ENCODE measurements at regions of chr1 and their contacts with region 1.

Region 1: GRCh38 chr1:113928941-113929749 is at the start of gene HIPK1:
- DNase-seq: peak; percentile 94 to 95
- ATAC-seq: peak; percentile 93 to 96 (median 95)
- H3K4me3 ChIP-seq: peak within 1 kb of the TSS; percentile 40 to 97 (median 90)
- H3K27ac ChIP-seq: peak within 1 kb of the TSS; percentile 80 to 97 (median 94)
- H3K4me1 ChIP-seq: peaks cover 2 to 52% (median 42%) of the 10 kb centered on the region in 9 donors
- H3K27me3 ChIP-seq: no peaks in the 10 kb centered on the region
- CTCF ChIP-seq: no peak
- total RNA-seq, gene HIPK1: 42.6 to 91.0 (median 62.2) TPM

Region 2: GRCh38 chr1:113811888-113812660 is 117.1 kb before region 1 on chr1 and contains the start of gene RSBN1:
- intact Hi-C with region 1: loop called in 1 of 10 experiments (anchors 1 kb)
- DNase-seq: peak; percentile 99
- ATAC-seq: peak; percentile 97 to 99 (median 98)
- H3K4me3 ChIP-seq: peak within 1 kb of the TSS; percentile 76 to 98 (median 91)
- H3K27ac ChIP-seq: peak within 1 kb of the TSS; percentile 77 to 97 (median 95)
- H3K4me1 ChIP-seq: peaks cover 0 to 34% (median 25%) of the 10 kb centered on the region in 9 donors
- H3K27me3 ChIP-seq: no peaks in the 10 kb centered on the region
- CTCF ChIP-seq: peak in 6 of 9 donors; percentile 7 to 47 (median 24)
- total RNA-seq, gene RSBN1: 7.5 to 13.9 (median 11.8) TPM

Region 3: DNA sequence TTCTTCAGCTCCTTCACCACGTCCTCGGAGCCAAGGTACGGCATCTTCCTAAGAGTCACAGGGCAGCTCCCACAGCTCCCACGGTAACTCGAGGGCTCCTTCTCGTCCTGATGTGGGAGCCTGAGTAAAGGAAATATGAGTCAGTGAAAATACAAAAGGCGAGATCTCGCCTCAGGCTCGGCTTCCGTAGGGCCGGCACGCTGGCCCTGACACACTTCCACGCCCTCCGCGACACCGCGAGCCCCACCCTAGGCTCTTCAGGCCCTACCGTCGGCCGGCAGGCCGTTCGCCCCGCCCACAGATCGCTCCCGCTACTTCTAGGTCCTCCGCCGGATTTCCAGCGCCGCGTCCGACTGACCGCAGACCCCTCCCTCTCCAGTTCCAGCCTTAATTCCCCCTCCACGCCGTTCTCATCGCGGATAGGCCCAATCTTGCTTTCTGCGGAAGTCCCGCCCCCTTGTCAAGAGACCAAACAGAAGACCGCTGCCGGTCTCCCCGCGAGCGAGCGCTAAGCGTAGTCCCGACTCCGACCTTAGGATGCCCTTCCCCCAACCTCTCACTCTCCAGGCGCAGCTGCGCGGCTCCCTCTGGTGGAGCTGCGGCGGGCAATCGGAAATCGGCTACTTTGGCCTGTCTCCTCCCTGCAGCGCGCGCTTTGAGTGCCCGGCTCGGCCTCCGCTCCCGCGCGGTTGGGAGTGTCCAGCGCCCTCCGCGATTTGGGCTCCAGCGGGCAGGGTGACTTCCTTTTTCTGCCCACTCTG is 24.3 kb before region 1 on chr1 and contains the starts of genes AP4B1 and DCLRE1B:
- intact Hi-C with region 1: loop called in 7 of 10 experiments (anchors 1 to 2 kb)
- DNase-seq: peak; percentile 98 to 100
- ATAC-seq: peak; percentile 96 to 99 (median 98)
- H3K4me3 ChIP-seq: peak within 1 kb of the TSS; percentile 58 to 86 (median 78)
- H3K27ac ChIP-seq: peak within 1 kb of the TSS; percentile 52 to 95 (median 92)
- H3K4me1 ChIP-seq: peaks cover 0 to 49% (median 24%) of the 10 kb centered on the region in 9 donors
- H3K27me3 ChIP-seq: no peaks in the 10 kb centered on the region
- CTCF ChIP-seq: peak; percentile 37 to 88 (median 71)
- total RNA-seq, gene AP4B1: 9.1 to 13.9 (median 11.5) TPM
- total RNA-seq, gene DCLRE1B: 0.78 to 4.2 (median 2.1) TPM

Region 4: DNA sequence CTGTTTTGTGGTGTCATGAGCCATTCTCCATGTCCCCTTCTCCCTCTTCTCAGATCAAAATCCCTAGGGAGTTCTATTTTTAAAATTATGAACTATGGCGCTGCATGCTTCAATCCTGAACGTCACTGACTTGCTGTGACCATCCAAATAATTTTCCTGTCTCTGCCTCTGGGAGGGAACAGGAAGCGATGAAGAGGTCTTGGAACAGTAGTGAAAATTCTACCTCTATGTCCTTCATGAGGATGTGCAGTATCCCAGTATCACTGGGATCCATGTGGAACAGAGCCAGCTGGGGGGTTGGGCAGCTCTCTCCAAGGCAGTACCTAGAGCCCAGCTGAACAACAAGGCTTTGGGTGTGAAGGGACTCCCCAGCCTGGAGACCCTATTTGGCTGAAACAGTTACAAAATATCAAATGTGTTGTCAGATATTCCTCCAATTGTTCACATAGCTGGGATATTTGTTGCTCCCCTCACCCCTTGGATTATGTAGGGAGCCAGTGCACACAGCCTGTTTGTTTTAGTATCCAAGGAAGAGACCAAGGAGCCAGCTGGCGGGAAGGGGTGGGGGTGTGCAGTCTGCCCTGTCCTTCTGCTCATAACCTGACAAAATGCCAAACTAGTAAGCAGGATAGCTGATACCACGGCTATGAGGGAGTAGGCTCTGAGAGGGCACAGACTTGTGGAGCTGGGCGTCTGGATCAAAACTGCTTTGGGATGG is 16.4 kb before region 1 on chr1:
- intact Hi-C with region 1: loop called in 2 of 10 experiments (anchors 2 kb)
- DNase-seq: peak; percentile 42 to 60
- ATAC-seq: peak; percentile 78 to 94 (median 90)
- H3K4me3 ChIP-seq: peak overlapping the region in 2 of 10 donors; percentile 6 to 21
- H3K27ac ChIP-seq: peak overlapping the region; percentile 39 to 86 (median 72)
- H3K4me1 ChIP-seq: peaks cover 0 to 20% (median 14%) of the 10 kb centered on the region in 9 donors
- H3K27me3 ChIP-seq: no peaks in the 10 kb centered on the region
- CTCF ChIP-seq: no peak

Region 5: DNA sequence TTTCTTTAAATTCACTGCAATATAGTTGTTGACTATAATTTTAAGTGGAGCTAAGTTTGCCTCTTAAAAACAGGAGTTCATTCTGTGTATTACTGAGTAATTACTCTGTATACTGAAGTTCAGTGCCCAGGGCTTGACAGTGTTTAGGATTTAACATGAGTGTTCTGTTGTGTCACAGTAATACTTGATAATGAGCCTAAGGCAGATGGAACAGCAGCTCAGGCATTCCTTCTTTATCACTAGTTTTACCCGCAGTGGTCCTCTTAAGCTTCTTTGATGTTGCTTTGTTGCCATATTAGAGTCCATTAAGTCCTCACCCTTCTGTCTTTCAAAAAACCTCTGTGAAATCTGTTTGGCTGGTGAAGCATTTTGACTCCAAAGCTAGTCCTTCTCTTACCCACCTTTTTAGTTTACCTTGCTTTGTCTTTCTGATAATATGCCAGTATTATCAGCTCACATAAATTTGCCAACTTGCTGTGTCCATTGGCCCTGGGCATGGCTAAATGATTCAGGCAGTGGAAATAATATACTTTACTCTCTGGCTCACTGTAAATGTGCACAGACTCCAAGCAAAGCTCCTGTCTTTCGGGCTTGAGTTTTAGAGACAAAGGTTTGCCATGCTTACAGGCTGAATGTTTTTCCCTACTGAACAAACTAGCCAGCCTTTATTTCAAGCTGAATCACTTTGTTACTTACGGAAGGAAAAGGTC is 17.7 kb after region 1 on chr1:
- intact Hi-C with region 1: loop called in 1 of 10 experiments (anchors 2 kb)
- DNase-seq: no peak
- ATAC-seq: peak in 3 of 8 donors; percentile 46 to 59 (median 46)
- H3K4me3 ChIP-seq: no peak overlapping the region
- H3K27ac ChIP-seq: peak overlapping the region in 7 of 10 donors; percentile 9 to 69 (median 44)
- H3K4me1 ChIP-seq: peaks cover 5 to 50% (median 31%) of the 10 kb centered on the region in 9 donors
- H3K27me3 ChIP-seq: no peaks in the 10 kb centered on the region
- CTCF ChIP-seq: no peak

Region 6: DNA sequence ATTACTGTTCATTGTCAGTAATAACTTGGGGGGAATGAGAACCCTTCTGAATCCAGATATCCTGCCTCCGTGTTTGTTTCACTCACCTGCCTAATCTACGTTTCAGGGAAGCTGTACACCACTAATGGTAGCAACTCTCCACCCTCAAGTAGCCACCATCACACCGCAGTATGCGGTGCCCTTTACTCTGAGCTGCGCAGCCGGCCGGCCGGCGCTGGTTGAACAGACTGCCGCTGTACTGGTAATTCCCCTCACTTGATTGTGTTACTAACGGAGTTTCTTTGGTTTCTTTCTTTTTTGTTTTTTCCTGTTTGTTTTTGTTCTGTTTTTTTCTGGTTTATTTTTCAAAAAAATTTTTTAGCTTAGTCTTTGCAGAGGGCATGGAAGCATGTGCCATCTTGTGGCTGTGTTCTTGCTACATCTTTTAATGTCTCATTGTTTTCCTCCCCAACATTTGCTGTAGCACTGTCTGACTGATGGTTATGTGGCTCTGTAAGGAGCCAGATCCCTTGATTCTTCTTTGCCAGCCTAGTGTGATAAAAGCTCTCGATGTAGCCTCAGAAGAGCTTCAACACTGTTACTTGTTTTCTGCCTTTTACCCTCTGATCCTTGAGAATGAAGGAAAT is 34.2 kb after region 1 on chr1:
- intact Hi-C with region 1: no loop called
- DNase-seq: no peak
- ATAC-seq: no peak
- H3K4me3 ChIP-seq: no peak overlapping the region
- H3K27ac ChIP-seq: no peak overlapping the region
- H3K4me1 ChIP-seq: no peaks in the 10 kb centered on the region
- H3K27me3 ChIP-seq: no peaks in the 10 kb centered on the region
- CTCF ChIP-seq: peak in 2 of 9 donors; percentile 8 to 12

Region 7: DNA sequence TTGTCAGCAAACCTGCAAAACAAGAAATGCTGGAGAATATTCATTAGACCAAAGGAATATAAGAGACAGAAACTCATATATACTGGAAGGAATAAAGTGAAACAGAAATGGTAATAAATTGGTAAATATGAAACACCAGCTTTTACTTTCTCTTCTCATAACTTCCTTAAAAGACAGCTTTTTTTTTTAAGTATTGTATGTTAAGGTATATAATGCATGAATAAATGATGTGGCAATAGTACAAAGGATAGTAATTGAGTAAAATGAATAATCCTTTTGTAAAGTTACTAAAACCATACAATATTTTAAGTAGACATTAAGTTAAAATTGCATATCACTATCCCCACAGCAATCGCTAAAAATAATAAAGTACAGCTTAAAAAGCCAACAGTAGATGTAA is 517.1 kb after region 1 on chr1:
- intact Hi-C with region 1: no loop called
- DNase-seq: no peak
- ATAC-seq: no peak
- H3K4me3 ChIP-seq: no peak overlapping the region
- H3K27ac ChIP-seq: peak overlapping the region in 1 of 10 donors; percentile 20
- H3K4me1 ChIP-seq: peaks cover 0 to 26% (median 10%) of the 10 kb centered on the region in 9 donors
- H3K27me3 ChIP-seq: no peaks in the 10 kb centered on the region
- CTCF ChIP-seq: no peak

Measured in heart right ventricle (tissue), 16 donors.